Heart right ventricle (tissue), 16 donors: ENCODE measurements at regions of chr4 and their contacts with region 1.

Region 1: DNA sequence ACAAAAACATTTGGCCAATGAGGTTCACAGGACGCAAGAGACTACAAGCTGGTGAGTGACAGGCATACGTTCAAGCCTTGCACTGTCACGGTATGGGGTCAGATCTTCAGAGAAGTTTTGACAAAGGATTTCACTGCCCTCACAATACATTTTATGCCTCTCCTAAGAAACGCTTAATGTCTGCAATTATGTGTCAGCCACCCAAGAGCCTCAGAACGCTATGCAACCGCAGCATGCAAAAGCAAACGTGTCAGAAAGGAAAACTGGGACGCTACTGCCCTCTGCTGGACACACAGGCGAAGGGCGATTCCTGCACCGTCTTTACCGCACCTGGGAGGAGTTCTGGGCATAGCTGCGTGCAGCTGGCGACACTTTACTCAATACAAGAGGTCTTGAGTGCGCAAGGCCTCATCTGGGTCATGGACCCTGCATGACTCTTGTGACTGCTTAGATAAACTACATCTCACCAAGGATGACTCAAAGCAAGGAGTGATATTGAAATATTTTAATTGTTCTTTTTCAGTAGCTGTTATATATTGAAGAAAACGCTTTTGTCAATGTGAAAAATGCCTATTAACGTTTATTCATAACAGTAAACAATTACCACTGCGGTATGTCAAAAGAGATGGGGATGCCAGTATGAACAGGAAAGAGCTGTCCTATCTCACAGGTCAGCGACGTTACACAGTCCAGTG is 147.6 kb upstream of the FRG1 start:
- DNase-seq: peak; percentile 61 to 64
- ATAC-seq: peak; percentile 61 to 93 (median 86)
- H3K4me3 ChIP-seq: peak overlapping the region in 7 of 10 donors; percentile 1 to 34 (median 19)
- H3K27ac ChIP-seq: no peak overlapping the region
- H3K4me1 ChIP-seq: peaks cover 0 to 8% (median 4%) of the 10 kb centered on the region in 9 donors
- H3K27me3 ChIP-seq: no peaks in the 10 kb centered on the region
- CTCF ChIP-seq: peak; percentile 86 to 97 (median 93)

Region 2: DNA sequence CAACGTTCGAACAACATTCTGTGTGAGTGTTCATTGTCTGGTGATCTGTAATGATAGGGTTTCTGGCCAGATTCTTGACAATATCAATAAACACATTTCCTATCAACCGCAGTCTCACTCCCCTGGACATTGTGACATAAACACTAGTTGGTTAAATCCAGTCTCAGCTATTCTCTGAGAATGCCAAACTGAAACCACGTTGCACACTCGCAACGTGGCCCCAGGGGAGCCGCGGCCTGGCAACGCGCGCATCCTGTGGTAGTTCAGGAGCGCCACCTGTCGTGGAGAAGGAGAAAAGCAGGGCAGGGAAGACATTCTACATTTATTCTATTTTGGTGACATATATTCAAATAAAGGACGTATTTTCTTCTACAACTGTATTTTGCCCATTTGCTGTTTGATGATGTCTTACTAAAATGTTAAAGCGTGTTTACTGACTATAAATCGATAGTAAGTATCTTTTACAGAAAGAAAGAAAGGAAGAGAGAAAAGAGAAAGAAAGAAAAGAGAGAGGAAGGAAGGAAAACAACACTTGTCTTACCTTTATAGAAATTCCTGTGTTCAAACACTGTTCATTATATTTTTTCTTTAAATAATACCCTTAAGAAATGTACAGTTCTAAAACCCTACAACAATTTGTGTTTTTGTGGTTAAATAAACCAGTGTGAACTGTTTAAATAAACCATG is 590.7 kb before region 1 on chr4:
- intact Hi-C with region 1: loop called in 1 of 10 experiments (anchors 10 kb)
- DNase-seq: peak; percentile 44 to 69
- ATAC-seq: peak in 6 of 8 donors; percentile 34 to 75 (median 57)
- H3K4me3 ChIP-seq: peak overlapping the region in 5 of 10 donors; percentile 10 to 25 (median 24)
- H3K27ac ChIP-seq: no peak overlapping the region
- H3K4me1 ChIP-seq: peaks cover 0 to 11% (median 0%) of the 10 kb centered on the region in 9 donors
- H3K27me3 ChIP-seq: peaks cover 0 to 17% (median 7%) of the 10 kb centered on the region in 7 donors
- CTCF ChIP-seq: peak; percentile 51 to 84 (median 74)